Motor neuron (in vitro differentiated cells): ENCODE measurements at regions of chr2 and their contacts with region 1.

Region 1: DNA sequence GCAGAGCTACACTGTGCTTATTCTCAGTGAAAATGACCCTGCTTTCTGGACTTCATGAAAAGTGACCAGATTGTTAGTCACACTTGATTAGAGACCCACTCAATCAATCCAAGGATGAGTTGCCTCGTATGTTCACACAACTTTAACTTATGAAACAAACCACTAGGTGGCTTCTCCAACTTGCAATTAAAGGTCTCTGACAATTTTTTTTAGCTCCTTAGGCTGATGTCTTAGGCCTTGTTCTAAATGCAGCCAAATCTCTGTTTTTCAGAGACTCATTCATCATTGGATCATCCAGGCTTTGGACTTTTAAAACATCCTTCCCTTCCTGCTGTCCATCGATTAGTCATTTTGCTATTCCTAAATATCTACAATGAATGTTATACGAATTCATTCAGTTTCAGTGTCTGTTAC is 63.4 kb downstream of the MREG start:
- ATAC-seq: peak in 3 of 8 experiments; percentile 83 to 87 (median 84)
- H3K4me3 ChIP-seq: no peak overlapping the region
- H3K27ac ChIP-seq: no peak overlapping the region
- H3K4me1 ChIP-seq: no peaks in the 10 kb centered on the region

Region 2: DNA sequence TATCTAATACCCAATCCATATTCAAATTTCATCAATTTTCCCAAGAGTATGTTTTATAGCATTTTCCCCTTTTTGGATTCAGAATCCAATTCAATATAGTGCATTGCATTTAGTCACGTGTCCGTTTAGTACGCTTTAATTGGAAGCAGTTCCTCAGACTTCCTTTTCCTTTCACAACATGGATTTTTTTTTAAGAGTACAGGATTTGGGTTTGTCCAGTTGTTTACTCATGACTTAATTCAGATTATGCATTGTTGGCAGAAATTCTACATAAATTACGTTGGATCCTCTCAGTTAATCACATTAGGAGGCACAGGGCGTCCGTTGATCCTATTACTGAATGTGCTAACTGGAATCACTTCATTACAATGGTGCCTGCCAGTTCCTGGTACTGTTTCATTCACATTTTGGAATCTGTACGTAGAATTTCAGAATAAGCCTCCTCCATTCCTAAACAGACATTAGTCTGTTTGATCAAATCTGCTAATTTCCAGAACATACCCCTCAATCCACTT is 708.1 kb before region 1 on chr2:
- in situ Hi-C with region 1: no loop called
- ATAC-seq: peak in 3 of 8 experiments; percentile 47 to 91 (median 81)
- H3K4me3 ChIP-seq: no peak overlapping the region
- H3K27ac ChIP-seq: no peak overlapping the region
- H3K4me1 ChIP-seq: no peaks in the 10 kb centered on the region

Region 3: GRCh38 chr2:216023055-216023648 is 73.2 kb after region 1 on chr2:
- in situ Hi-C with region 1: loop called in 1 of 9 experiments (anchors 10 kb)
- ATAC-seq: peak in 5 of 8 experiments; percentile 30 to 93 (median 80)
- H3K4me3 ChIP-seq: no peak overlapping the region
- H3K27ac ChIP-seq: no peak overlapping the region
- H3K4me1 ChIP-seq: no peaks in the 10 kb centered on the region

Region 4: DNA sequence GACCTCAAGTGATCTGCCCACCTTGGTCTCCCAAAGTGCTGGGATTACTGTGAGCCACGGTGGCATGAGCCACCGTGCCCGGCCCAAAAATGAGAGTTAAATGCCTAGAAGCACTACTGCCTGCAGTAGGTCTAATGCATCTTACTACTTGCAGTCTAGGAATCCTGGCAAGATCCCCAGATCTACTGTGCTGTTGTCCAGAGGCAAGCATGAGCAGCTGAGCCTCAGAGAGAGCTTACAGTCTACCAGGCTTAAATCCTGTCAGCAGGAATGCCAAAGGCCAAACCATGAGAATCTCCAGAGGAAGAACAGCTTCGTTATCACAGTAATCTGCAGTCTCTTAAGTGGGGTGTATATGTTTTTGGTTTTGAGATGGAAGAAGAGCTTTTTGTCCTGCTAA is 213.5 kb after region 1 on chr2:
- in situ Hi-C with region 1: no loop called
- ATAC-seq: no peak
- H3K4me3 ChIP-seq: no peak overlapping the region
- H3K27ac ChIP-seq: no peak overlapping the region
- H3K4me1 ChIP-seq: peaks cover 0 to 6% of the 10 kb centered on the region in 2 donors

Region 5: DNA sequence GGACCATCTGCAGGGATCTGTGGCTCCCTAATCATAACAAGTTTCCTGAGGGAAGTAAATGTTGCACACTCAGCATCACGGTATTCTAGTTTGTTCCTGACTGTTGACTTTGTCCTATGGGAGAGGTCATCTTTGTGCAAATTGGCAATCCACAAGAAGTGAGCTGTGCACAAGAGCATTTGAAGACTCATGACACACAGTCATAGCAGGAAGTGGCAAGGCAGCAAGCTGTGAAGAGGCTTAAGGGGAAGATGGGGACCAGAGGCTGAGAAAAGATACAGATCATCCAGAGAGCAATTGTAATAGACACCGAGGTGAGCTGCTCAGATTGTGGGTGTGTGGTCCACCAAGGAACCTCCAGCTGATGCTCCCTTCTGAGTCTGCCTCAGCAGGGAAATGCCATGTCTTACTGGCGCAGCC is 907.1 kb after region 1 on chr2:
- in situ Hi-C with region 1: no loop called
- ATAC-seq: peak in 4 of 8 experiments; percentile 13 to 54 (median 34)
- H3K4me3 ChIP-seq: no peak overlapping the region
- H3K27ac ChIP-seq: no peak overlapping the region
- H3K4me1 ChIP-seq: peaks cover 18 to 26% of the 10 kb centered on the region in 2 donors